Common myeloid progenitor, CD34-positive (primary cell): ENCODE measurements at regions of chr1 and their contacts with region 1.

Region 1: DNA sequence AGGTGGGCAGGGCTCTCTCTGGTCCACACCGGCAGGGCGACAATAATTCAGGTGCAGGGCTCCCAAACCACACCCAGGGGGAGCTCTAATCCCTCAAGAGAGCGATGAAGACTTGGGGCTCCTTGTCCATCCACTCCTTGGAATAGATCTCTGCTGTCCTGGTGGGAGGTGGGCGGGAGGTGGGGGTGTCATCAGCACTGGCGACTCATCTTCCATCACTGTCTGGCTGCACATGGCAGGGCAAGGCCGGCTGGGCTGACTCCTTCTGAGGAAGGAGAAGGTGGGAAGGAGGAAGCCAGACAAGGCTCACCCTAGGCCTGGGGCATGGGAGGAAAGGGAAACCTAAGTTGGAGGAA is 29.3 kb downstream of the TNNT2 start:
- DNase-seq: peak; percentile 40 to 64 (median 50)
- H3K4me3 ChIP-seq: no peak overlapping the region
- H3K27ac ChIP-seq: no peak overlapping the region
- H3K4me1 ChIP-seq: no peaks in the 10 kb centered on the region
- H3K27me3 ChIP-seq: peaks cover 0 to 19% (median 7%) of the 10 kb centered on the region in 5 experiments

Region 2: GRCh38 chr1:201137579-201138310 is 210.4 kb before region 1 on chr1:
- CTCF ChIA-PET with region 1: no interaction called
- POLR2A ChIA-PET with region 1: no interaction called
- DNase-seq: no peak
- H3K4me3 ChIP-seq: no peak overlapping the region
- H3K27ac ChIP-seq: no peak overlapping the region
- H3K4me1 ChIP-seq: no peaks in the 10 kb centered on the region
- H3K27me3 ChIP-seq: no peaks in the 10 kb centered on the region

Region 3: GRCh38 chr1:201316556-201316955 is 31.6 kb before region 1 on chr1:
- CTCF ChIA-PET with region 1: interaction called, 10 read pairs
- POLR2A ChIA-PET with region 1: no interaction called
- DNase-seq: no peak
- H3K4me3 ChIP-seq: no peak overlapping the region
- H3K27ac ChIP-seq: no peak overlapping the region
- H3K4me1 ChIP-seq: no peaks in the 10 kb centered on the region
- H3K27me3 ChIP-seq: peaks cover 0 to 6% (median 0%) of the 10 kb centered on the region in 5 experiments

Region 4: GRCh38 chr1:201327687-201328235 is 20.4 kb before region 1 on chr1:
- CTCF ChIA-PET with region 1: no interaction called
- POLR2A ChIA-PET with region 1: no interaction called
- DNase-seq: no peak
- H3K4me3 ChIP-seq: no peak overlapping the region
- H3K27ac ChIP-seq: no peak overlapping the region
- H3K4me1 ChIP-seq: no peaks in the 10 kb centered on the region
- H3K27me3 ChIP-seq: peaks cover 0 to 6% (median 0%) of the 10 kb centered on the region in 5 experiments

Region 5: DNA sequence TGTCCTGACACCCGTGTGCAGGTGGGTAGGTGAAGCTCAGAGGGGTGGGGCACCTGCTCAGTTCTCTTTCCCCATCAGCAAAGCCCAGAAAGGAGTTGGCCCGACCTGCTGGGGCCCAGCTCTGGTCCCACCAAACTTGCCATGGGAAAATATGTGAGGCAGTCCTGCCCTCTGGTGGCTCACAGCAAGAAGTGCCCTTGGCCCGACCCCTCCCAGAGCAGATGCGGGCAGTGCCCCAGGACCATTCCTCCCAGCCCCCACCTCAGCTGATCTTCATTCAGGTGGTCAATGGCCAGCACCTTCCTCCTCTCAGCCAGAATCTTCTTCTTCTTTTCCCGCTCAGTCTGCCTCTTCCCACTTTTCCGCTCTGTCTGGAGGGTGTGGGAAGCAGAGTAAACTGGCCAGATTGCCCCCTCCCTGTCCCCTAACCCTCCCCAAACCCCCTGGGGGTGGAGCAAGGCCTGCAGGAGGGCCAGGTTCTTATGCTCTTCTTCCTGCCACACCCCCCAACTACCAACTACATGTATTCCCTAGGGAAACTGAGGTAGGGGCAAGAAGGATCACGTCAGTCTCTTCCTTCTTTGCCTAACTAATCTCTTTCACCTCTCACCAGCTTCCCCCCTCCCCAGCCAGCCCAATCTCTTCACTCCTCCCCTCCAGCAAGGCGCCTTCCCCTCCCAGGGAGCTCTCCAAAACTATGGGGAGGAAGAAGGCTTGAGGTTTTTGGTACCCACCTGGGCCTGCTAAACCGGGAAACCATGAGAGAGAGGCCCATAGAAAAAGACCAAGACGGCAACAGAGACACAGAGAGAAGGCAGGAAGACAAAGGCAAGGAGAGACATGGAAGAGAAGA is 13.7 kb after region 1 on chr1:
- CTCF ChIA-PET with region 1: interaction called, 24 read pairs
- POLR2A ChIA-PET with region 1: no interaction called
- DNase-seq: peak; percentile 39 to 63 (median 57)
- H3K4me3 ChIP-seq: no peak overlapping the region
- H3K27ac ChIP-seq: no peak overlapping the region
- H3K4me1 ChIP-seq: no peaks in the 10 kb centered on the region
- H3K27me3 ChIP-seq: peaks cover 0 to 24% (median 5%) of the 10 kb centered on the region in 5 experiments